Natural killer cell (primary cell): ENCODE measurements at regions of chr2 and their contacts with region 1.

Region 1: DNA sequence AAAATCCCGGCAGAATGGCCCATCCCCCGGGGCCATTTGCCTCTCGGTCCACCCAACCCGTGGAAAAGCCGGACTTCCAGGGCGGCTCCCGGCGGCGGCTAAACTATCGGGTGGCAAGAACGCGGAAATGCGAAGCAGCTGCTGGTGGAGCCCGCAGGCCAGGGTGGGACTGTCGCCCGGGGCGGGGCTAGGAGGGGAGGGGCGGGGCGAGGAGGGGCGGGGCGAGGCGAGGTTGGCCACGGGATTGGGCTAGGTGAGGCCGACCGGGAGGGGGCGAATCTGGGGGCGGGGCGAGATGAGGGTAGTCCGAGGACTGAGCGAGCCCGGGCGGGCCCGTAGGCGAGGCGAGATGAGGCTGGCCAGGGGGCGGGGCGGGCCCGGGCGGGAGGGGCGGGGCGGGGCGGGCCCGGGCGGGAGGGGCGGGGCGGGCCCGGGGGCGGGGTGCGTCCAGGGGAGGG is 315 bp upstream of the SLC66A3 start:
- DNase-seq: peak; percentile 94 to 98
- ATAC-seq: peak; percentile 90 to 97 (median 91)
- H3K4me3 ChIP-seq: peak overlapping the region; percentile 70
- H3K4me3 Mint-ChIP-seq: peak overlapping the region; percentile 75
- H3K27ac ChIP-seq: peak overlapping the region; percentile 95
- H3K27ac Mint-ChIP-seq: peak overlapping the region; percentile 75 to 86
- H3K4me1 ChIP-seq: peaks cover 26% of the 10 kb centered on the region
- H3K4me1 Mint-ChIP-seq: peaks cover 12 to 24% of the 10 kb centered on the region in 2 donors
- H3K27me3 ChIP-seq: no peaks in the 10 kb centered on the region
- H3K27me3 Mint-ChIP-seq: no peaks in the 10 kb centered on the region
- CTCF ChIP-seq: no peak

Region 2: DNA sequence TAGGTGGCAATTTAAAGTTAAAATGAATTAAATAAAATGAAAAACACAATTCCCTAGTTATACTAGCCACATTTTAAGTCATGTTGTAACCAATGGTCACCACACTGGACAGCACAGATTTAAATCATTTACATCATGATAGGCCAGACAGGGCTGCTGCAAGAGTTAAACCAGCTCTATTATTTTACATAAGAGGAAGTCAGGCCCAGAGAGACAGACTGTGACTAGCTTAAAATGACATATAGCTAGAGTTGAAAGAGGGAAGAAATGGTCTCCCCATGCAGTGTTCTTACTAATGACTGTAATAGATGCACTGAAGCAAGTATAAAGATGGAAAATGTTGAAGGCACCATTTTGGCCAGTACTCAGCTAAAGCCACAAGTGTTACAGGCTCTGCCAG is 69.9 kb after region 1 on chr2:
- intact Hi-C with region 1: no loop called
- DNase-seq: no peak
- ATAC-seq: no peak
- H3K4me3 ChIP-seq: no peak overlapping the region
- H3K4me3 Mint-ChIP-seq: no peak overlapping the region
- H3K27ac ChIP-seq: no peak overlapping the region
- H3K27ac Mint-ChIP-seq: no peak overlapping the region
- H3K4me1 ChIP-seq: no peaks in the 10 kb centered on the region
- H3K4me1 Mint-ChIP-seq: no peaks in the 10 kb centered on the region
- H3K27me3 ChIP-seq: no peaks in the 10 kb centered on the region
- H3K27me3 Mint-ChIP-seq: no peaks in the 10 kb centered on the region
- CTCF ChIP-seq: no peak

Region 3: GRCh38 chr2:11286749-11287148 is 131.8 kb after region 1 on chr2:
- intact Hi-C with region 1: no loop called
- DNase-seq: no peak
- ATAC-seq: no peak
- H3K4me3 ChIP-seq: no peak overlapping the region
- H3K4me3 Mint-ChIP-seq: no peak overlapping the region
- H3K27ac ChIP-seq: no peak overlapping the region
- H3K27ac Mint-ChIP-seq: no peak overlapping the region
- H3K4me1 ChIP-seq: no peaks in the 10 kb centered on the region
- H3K4me1 Mint-ChIP-seq: peaks cover 13 to 39% of the 10 kb centered on the region in 2 donors
- H3K27me3 ChIP-seq: no peaks in the 10 kb centered on the region
- H3K27me3 Mint-ChIP-seq: no peaks in the 10 kb centered on the region
- CTCF ChIP-seq: no peak

Region 4: DNA sequence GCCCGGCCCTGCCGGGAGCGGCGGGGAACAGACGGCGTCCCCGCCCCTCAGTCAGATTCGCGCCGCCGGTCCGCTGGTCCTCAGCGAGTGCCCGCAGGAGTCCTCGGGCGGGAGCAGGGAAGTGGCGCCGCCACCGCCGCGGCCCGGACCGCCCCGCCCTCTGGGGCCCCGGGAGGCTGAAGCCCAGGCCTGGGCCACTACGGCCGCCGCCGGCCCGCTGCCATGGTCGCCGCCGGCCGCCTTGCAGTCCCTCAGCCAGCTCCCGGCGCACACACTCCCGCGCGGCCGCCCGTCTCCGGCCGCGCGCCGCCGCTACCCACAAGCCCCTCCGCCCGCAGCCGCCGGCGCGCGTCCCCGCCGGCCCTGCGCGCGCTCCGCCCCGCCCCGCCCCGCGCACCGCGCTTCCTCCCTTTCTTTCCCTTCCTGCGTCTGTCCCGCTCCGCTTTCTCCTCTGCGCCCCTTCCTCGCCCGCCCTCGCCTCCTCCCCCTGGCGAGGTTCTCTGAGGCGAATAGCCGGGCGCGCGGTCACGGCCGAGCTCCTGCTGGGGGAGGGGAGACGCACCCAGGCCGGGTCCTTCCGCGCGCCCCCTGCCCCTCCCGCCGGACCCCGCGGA is 189.5 kb after region 1 on chr2 and contains the start of gene ROCK2:
- intact Hi-C with region 1: loop called (anchors 10 kb)
- DNase-seq: peak; percentile 56 to 77
- ATAC-seq: peak; percentile 69 to 82 (median 76)
- H3K4me3 ChIP-seq: peak within 1 kb of the TSS; percentile 92
- H3K4me3 Mint-ChIP-seq: peak within 1 kb of the TSS; percentile 99
- H3K27ac ChIP-seq: peak within 1 kb of the TSS; percentile 71
- H3K27ac Mint-ChIP-seq: peak within 1 kb of the TSS; percentile 87 to 94
- H3K4me1 ChIP-seq: peaks cover 11% of the 10 kb centered on the region
- H3K4me1 Mint-ChIP-seq: peaks cover 14 to 31% of the 10 kb centered on the region in 2 donors
- H3K27me3 ChIP-seq: no peaks in the 10 kb centered on the region
- H3K27me3 Mint-ChIP-seq: no peaks in the 10 kb centered on the region
- CTCF ChIP-seq: no peak
- total RNA-seq, gene ROCK2: 19.9 to 28.2 (median 21.9) TPM

Region 5: DNA sequence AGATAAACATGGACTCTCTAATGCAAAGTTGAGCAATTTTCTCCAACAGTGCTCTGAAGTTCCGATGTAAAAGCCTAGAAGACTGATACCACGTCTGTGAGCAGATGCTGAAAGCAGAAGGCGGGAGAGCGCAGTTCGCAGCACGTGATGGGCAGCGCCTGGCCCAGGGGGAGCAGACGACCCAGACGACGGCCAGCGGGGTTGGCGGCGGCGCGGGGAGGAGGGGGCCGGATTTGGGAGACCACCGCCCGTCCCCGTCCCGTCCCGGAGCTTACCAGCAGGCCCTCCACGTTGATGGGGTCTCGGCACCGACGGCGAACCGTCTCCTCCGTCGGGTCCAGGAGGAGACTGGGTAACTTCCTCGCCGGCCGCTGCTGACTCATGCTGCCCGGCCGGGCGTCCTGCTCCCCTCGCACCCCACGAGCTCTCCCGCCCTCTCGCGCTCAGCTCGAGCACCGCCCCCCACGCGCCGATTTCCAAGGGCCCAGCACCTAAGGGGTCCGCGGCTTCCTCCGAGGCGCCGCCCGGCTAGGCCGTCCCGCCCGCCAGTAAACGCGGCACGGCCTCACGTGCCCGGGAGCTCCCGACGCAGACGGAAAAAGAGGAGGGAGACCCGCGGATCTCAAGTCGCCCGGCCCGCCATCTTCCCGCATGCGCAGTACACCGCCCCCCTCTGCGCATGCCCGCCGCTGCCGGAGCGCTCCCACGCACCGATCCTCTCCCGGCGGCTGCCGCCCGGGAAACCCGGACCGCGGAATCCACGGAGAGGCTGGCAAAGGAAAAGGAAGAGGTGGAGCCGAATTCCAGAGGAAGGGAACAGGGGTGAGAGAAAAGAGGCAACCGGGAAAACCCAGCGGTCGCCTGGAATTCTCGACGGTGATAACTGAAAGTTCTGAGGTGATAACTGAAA is 310.8 kb after region 1 on chr2 and contains the start of gene E2F6:
- intact Hi-C with region 1: loop called (anchors 5 kb)
- DNase-seq: peak; percentile 85 to 86
- ATAC-seq: peak; percentile 79 to 82 (median 81)
- H3K4me3 ChIP-seq: peak within 1 kb of the TSS; percentile 82
- H3K4me3 Mint-ChIP-seq: peak within 1 kb of the TSS; percentile 99
- H3K27ac ChIP-seq: peak within 1 kb of the TSS; percentile 62
- H3K27ac Mint-ChIP-seq: peak within 1 kb of the TSS; percentile 83 to 88
- H3K4me1 ChIP-seq: peaks cover 13% of the 10 kb centered on the region
- H3K4me1 Mint-ChIP-seq: peaks cover 19 to 44% of the 10 kb centered on the region in 2 donors
- H3K27me3 ChIP-seq: no peaks in the 10 kb centered on the region
- H3K27me3 Mint-ChIP-seq: no peaks in the 10 kb centered on the region
- CTCF ChIP-seq: no peak
- total RNA-seq, gene E2F6: 4.6 to 9.6 (median 8.3) TPM